ENCODE measurements at regions of chr4 and their contacts with region 1.

Region 1: DNA sequence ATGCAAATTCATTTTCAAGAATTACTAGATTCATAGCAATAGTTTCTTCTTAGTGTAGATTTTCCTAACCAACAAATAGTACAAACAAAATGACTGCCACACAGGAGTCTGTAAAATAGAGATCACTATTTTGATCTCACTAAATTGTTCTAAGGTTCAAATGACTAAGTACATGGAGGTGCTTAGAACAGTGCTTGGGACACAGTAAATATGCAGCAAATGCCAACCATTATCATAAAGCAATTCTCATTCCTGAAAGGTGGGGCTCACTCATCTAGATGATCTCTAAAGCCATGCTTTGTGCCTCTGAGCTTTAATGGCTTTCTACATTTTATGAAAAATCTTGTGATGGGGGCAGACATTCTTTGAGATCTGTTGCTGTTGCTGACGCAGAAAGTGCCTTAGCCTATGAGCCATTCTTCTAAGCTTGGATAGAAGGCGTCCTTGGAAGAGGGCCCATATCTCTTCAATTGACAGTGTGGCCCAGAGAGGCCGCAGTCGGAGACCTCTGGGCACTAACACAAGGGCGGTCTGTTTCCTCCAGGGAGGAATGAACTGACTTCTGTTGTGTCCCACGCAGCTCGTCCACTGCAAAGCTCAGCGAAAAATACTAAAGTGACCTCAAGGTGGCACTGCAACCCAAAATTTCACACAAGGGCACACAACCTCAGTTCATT is 23.5 kb downstream of the TLR10 start:
- DNase-seq: peak; percentile 59
- H3K4me3 Mint-ChIP-seq: no peak overlapping the region
- H3K27ac Mint-ChIP-seq: no peak overlapping the region
- H3K4me1 Mint-ChIP-seq: no peaks in the 10 kb centered on the region
- H3K27me3 Mint-ChIP-seq: no peaks in the 10 kb centered on the region
- CTCF ChIP-seq: peak; percentile 78

Region 2: DNA sequence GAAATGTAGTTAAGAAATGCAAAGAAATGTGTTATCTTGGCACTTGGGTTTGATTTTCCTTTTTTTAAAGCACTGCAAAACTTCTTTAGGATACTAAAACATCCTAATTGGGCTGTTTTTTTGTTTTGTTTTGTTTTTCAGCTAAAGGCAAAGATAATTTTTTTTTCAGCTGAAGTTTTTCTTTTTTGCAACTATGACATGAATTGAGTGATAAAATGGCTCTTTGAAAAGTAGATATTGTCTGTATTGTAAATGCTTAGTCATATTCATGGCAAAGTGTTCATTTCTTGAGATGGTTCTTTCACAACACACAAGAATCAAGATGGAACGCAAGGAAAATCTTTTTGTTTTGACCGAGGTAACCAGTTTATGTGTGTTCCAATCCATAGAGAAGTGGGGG is 60.1 kb before region 1 on chr4:
- CTCF ChIA-PET with region 1: no interaction called
- POLR2A ChIA-PET with region 1: no interaction called
- intact Hi-C with region 1: no loop called
- DNase-seq: no peak
- H3K4me3 Mint-ChIP-seq: no peak overlapping the region
- H3K27ac Mint-ChIP-seq: no peak overlapping the region
- H3K4me1 Mint-ChIP-seq: no peaks in the 10 kb centered on the region
- H3K27me3 Mint-ChIP-seq: no peaks in the 10 kb centered on the region
- CTCF ChIP-seq: no peak

Region 3: DNA sequence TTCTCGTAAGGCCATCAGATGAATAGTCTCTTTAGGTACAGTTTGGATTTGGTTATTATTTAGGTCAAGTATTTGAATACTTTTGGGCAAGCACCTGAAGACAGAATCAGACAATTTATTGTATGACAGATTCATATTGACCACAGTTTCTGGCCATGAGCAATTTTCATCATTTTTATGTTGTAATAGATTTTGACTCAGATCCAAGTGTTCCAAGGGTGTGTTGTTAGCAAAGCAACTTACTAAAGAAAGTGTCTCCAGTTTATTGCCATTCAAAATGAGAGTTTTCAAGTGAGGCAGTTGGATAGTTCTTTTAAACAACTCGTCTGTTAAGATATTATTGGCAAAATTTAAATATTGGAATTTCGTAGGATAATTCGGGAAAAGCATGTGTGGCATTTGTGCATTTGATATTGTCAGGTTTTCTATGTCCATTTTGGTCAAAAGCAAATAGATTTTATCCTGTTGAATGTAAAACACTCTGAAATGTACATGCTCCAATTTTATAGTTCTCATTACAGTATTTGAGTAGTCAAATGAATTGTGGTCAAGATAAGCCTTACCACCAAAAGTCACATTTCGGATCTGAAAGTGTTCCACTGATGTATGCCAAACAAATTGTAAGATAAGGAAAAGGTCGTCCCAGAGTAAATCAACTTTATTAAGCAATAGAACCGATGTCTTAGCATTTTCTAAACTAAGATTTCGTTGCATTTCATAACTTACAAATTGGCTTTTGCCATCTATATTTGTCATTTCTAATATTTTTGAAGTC is 15.1 kb after region 1 on chr4:
- CTCF ChIA-PET with region 1: interaction called, 70 read pairs
- POLR2A ChIA-PET with region 1: interaction called, 3 read pairs
- intact Hi-C with region 1: no loop called
- DNase-seq: peak; percentile 64
- H3K4me3 Mint-ChIP-seq: no peak overlapping the region
- H3K27ac Mint-ChIP-seq: peak overlapping the region; percentile 7
- H3K4me1 Mint-ChIP-seq: peaks cover 17% of the 10 kb centered on the region
- H3K27me3 Mint-ChIP-seq: no peaks in the 10 kb centered on the region
- CTCF ChIP-seq: no peak

Region 4: DNA sequence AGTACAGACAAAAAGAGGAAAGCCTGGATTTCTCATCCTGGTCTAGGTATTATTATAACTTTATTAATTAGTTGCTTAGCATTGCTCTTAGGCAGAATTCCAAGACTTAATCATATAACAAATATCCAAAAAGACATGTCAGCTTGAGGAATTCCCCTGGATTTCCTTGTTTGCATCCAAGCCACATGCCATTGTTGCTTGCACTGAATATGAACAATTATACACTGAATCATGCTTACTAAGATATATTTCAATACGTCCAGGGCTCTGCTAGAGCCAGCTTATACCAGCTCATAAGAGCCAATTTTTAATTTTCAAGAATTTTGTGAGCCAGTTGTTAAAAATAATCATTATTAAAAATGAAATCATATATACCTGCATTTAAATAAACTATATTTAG is 29.1 kb after region 1 on chr4:
- CTCF ChIA-PET with region 1: interaction called, 268 read pairs
- POLR2A ChIA-PET with region 1: interaction called, 11 read pairs
- intact Hi-C with region 1: no loop called
- DNase-seq: no peak
- H3K4me3 Mint-ChIP-seq: no peak overlapping the region
- H3K27ac Mint-ChIP-seq: no peak overlapping the region
- H3K4me1 Mint-ChIP-seq: peaks cover 6% of the 10 kb centered on the region
- H3K27me3 Mint-ChIP-seq: no peaks in the 10 kb centered on the region
- CTCF ChIP-seq: no peak

Region 5: GRCh38 chr4:38856524-38857337 is 97.5 kb after region 1 on chr4 and contains the start of gene TLR6:
- CTCF ChIA-PET with region 1: interaction called, 50 read pairs
- POLR2A ChIA-PET with region 1: interaction called, 9 read pairs
- intact Hi-C with region 1: loop called (anchors 1 kb)
- DNase-seq: peak; percentile 83
- H3K4me3 Mint-ChIP-seq: peak within 1 kb of the TSS; percentile 75
- H3K27ac Mint-ChIP-seq: peak within 1 kb of the TSS; percentile 91
- H3K4me1 Mint-ChIP-seq: peaks cover 35% of the 10 kb centered on the region
- H3K27me3 Mint-ChIP-seq: no peaks in the 10 kb centered on the region
- CTCF ChIP-seq: peak; percentile 67
- total RNA-seq, gene TLR6: 7.7 and 11.4 TPM in 2 replicates

Region 6: GRCh38 chr4:38902695-38903094 is 143.4 kb after region 1 on chr4:
- CTCF ChIA-PET with region 1: interaction called, 11 read pairs
- POLR2A ChIA-PET with region 1: no interaction called
- intact Hi-C with region 1: no loop called
- DNase-seq: peak; percentile 47
- H3K4me3 Mint-ChIP-seq: no peak overlapping the region
- H3K27ac Mint-ChIP-seq: no peak overlapping the region
- H3K4me1 Mint-ChIP-seq: no peaks in the 10 kb centered on the region
- H3K27me3 Mint-ChIP-seq: no peaks in the 10 kb centered on the region
- CTCF ChIP-seq: peak; percentile 55

Region 7: GRCh38 chr4:39103291-39103690 is 344.0 kb after region 1 on chr4:
- CTCF ChIA-PET with region 1: no interaction called
- POLR2A ChIA-PET with region 1: no interaction called
- intact Hi-C with region 1: no loop called
- DNase-seq: no peak
- H3K4me3 Mint-ChIP-seq: no peak overlapping the region
- H3K27ac Mint-ChIP-seq: no peak overlapping the region
- H3K4me1 Mint-ChIP-seq: peaks cover 15% of the 10 kb centered on the region
- H3K27me3 Mint-ChIP-seq: no peaks in the 10 kb centered on the region
- CTCF ChIP-seq: no peak

Region 8: DNA sequence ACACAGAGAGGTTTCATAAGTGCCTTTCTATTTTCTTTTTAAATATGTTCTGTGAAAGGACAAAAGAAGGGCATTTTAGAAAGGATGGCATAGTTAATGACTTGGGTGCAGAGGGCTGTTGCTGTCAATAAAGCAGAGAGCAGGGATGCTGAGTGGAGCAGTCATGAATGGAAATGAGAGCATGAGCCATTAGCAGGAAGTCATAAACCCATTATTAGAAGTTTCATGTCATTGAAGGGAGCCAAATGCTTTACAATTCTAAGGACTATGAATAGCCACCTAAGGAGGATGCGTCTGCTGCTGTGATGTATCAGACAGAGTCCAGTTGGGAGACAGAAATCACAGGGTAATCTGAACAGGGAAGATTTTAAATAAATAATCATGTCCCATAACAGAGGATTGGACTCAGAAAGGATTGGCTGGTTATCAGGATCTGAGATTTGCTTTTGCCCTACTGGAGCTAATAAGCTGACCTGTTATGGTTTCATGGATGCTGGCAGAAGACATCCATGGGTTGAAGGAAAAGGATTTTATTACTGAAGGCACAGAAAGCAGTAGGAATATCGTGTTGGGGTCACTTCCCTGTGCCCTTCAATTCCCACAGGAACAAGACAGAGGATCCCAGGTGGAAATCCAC is 375.6 kb after region 1 on chr4:
- CTCF ChIA-PET with region 1: interaction called, 12 read pairs
- POLR2A ChIA-PET with region 1: interaction called, 3 read pairs
- intact Hi-C with region 1: loop called (anchors 2 kb)
- DNase-seq: no peak
- H3K4me3 Mint-ChIP-seq: no peak overlapping the region
- H3K27ac Mint-ChIP-seq: peak overlapping the region; percentile 76
- H3K4me1 Mint-ChIP-seq: no peaks in the 10 kb centered on the region
- H3K27me3 Mint-ChIP-seq: no peaks in the 10 kb centered on the region
- CTCF ChIP-seq: no peak